Keratinocyte (primary cell): ENCODE measurements at regions of chr9 and their contacts with region 1.

Region 1: GRCh38 chr9:113340017-113340699 is at the start of gene WDR31:
- DNase-seq: no peak
- H3K4me3 ChIP-seq: peak within 1 kb of the TSS; percentile 69 to 76 (median 71)
- H3K27ac ChIP-seq: peak within 1 kb of the TSS; percentile 33
- H3K4me1 ChIP-seq: peaks cover 18% of the 10 kb centered on the region
- H3K27me3 ChIP-seq: no peaks in the 10 kb centered on the region
- CTCF ChIP-seq: peak in 1 of 3 experiments; percentile 5
- polyA plus RNA-seq, gene WDR31: 0.94 to 2.3 TPM (median 1.2 TPM) in 3 replicates

Region 2: DNA sequence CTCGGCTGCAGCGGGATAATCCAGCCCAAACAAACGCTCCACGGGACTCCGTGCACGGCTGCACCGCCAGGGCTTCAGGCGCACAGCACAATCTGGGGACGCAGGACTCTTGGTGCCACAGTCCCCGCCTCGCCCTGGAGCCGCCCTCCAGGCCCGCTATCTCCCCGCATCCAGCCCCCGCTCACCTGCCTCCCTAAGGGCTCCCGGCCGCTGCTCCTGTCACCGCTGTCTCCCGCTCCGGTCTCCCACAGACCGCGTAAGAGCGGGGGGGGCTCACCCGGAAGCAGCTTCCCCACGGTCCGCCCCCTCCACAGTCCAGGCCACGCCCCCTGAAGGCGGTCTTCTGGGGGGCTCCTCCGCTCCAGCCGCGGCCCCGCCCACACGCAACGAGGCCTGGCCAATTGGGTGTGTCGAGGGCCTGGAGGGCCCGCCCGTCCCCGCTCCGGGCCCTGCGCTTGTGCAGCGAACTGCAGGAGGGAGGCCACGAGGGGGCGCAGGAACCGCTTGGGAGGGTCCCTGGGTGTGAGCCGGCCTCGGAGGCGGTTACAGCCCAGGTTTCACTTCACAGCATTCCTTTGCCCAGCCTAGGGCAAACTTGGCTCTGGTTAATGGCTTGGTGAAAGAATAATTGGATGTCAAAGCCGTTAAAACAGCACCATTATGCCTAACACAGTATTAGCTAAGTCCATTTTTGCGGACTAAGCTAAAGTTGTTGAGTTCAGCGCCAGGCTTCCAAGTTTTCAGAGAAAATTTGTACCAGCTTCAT is 61.1 kb after region 1 on chr9 and contains the start of gene ALAD:
- dilution Hi-C with region 1: loop called (anchors 10 kb)
- DNase-seq: peak; percentile 87
- H3K4me3 ChIP-seq: peak within 1 kb of the TSS; percentile 78 to 85 (median 78)
- H3K27ac ChIP-seq: peak within 1 kb of the TSS; percentile 61
- H3K4me1 ChIP-seq: peaks cover 25% of the 10 kb centered on the region
- H3K27me3 ChIP-seq: no peaks in the 10 kb centered on the region
- CTCF ChIP-seq: peak; percentile 88 to 95 (median 88)
- polyA plus RNA-seq, gene ALAD: 6.7 to 9.3 TPM (median 9.0 TPM) in 3 replicates